ENCODE measurements at regions of chr1 and their contacts with region 1.

Region 1: DNA sequence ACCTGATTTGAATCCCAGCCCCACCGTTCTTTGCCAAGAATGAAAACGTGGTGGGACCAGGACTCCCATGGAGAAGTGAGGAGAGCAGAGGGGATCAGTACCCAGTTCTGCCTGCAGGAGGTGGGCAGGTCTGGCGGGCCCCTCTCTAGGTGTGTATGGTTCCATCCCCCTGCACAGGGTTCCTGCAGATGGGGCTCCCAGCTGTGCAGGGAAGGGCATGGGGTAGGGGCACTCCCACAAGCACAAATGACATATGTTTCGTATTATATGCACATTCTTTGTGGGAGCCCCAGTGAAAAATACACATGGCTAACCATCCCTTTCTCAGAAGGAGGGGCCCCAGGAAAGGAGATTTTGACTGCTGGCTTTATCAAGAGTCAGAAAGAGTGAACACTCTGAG is 144.6 kb downstream of the PLPP3 start:
- DNase-seq: no peak
- ATAC-seq: no peak
- H3K4me3 Mint-ChIP-seq: peak overlapping the region; percentile 16
- H3K27ac Mint-ChIP-seq: peak overlapping the region; percentile 10
- H3K4me1 Mint-ChIP-seq: peaks cover 69% of the 10 kb centered on the region
- H3K27me3 Mint-ChIP-seq: no peaks in the 10 kb centered on the region
- CTCF ChIP-seq: no peak

Region 2: GRCh38 chr1:56370513-56370912 is 64.2 kb before region 1 on chr1:
- CTCF ChIA-PET with region 1: no interaction called
- POLR2A ChIA-PET with region 1: no interaction called
- intact Hi-C with region 1: no loop called
- DNase-seq: no peak
- ATAC-seq: no peak
- H3K4me3 Mint-ChIP-seq: no peak overlapping the region
- H3K27ac Mint-ChIP-seq: no peak overlapping the region
- H3K4me1 Mint-ChIP-seq: peaks cover 2% of the 10 kb centered on the region
- H3K27me3 Mint-ChIP-seq: peaks cover 3% of the 10 kb centered on the region
- CTCF ChIP-seq: no peak

Region 3: GRCh38 chr1:56380531-56380930 is 54.2 kb before region 1 on chr1:
- CTCF ChIA-PET with region 1: no interaction called
- POLR2A ChIA-PET with region 1: interaction called, 16 read pairs
- intact Hi-C with region 1: no loop called
- DNase-seq: no peak
- ATAC-seq: no peak
- H3K4me3 Mint-ChIP-seq: no peak overlapping the region
- H3K27ac Mint-ChIP-seq: no peak overlapping the region
- H3K4me1 Mint-ChIP-seq: no peaks in the 10 kb centered on the region
- H3K27me3 Mint-ChIP-seq: no peaks in the 10 kb centered on the region
- CTCF ChIP-seq: no peak

Region 4: DNA sequence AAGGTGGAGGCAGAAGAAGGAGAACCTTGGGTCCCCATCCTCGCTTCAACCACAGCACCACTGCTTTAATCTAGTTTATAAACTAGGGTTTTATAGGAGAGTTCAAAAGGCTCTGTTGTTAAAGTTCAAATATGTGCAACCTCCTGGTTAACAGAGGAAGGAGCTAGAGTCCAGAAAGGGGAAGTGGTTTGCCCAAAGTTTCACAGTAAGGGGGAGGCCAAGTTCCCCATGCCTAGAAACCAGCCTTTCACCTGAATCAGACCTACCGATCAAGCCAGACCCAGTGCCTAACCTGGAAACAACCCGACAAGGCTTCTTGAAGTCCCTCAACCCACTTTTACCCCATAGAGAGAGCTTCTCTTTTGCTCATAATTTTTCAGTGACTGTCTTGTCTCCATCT is 38.1 kb after region 1 on chr1:
- CTCF ChIA-PET with region 1: no interaction called
- POLR2A ChIA-PET with region 1: no interaction called
- intact Hi-C with region 1: loop called (anchors 5 kb)
- DNase-seq: peak; percentile 17
- ATAC-seq: peak; percentile 92
- H3K4me3 Mint-ChIP-seq: peak overlapping the region; percentile 55
- H3K27ac Mint-ChIP-seq: peak overlapping the region; percentile 61
- H3K4me1 Mint-ChIP-seq: peaks cover 57% of the 10 kb centered on the region
- H3K27me3 Mint-ChIP-seq: peaks cover 9% of the 10 kb centered on the region
- CTCF ChIP-seq: no peak

Measured in activated B cell treated with CpG ODN at 0.5 μM for 24 hours (primary cell).